A673 (cell line): ENCODE measurements at regions of chr5 and their contacts with region 1.

Region 1: DNA sequence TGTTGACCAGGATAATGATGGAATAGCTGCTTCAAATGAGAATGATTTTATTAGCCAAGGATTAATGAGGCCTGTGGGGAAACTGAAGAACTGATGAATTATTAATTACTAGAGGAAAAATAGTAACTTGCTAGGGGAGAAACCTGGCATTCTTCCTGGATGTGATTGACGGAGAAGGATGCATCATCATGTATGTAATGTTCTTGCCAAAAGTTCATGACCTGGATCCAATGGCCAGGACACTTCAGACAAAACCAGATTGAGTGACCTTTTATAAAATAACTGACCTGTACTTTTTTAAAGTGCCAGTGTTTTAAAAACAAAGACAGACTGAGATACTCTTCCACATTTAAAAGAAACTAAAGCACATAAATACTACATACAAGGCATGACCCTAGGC is 23.7 kb downstream of the KIAA1191 start:
- DNase-seq: no peak
- H3K4me3 ChIP-seq: no peak overlapping the region
- H3K27ac ChIP-seq: no peak overlapping the region
- H3K4me1 ChIP-seq: no peaks in the 10 kb centered on the region
- H3K27me3 ChIP-seq: no peaks in the 10 kb centered on the region
- CTCF ChIP-seq: no peak

Region 2: DNA sequence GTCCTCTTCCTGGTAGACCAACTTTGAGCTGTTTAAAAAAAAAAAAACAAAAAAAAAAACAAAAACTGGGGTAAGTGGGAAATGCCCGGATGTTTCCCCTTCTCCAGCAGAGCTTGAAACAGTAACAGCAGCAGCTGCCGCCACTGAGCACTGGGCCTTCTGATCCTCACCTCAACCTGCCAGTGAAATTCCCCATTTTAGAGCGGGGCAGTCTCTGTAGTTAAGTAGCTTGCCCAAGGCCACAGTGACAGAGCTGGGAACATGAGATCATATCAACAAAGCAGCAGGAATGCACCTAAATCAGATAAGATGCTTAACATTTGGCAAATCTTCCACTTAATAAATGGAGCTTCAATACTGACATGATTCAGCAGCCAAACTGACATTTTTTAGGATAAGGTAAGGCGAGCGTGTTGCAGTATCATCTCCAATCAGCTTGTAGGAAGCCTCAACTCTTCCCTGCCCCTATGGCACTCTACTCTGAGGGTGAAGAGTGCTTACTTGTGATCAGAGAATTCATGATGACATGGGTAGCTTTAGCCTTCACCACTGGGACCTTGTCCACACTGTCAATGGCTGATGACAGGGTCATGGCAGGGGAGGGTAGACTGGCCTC is 14.3 kb after region 1 on chr5:
- CTCF ChIA-PET with region 1: interaction called, 10 read pairs
- POLR2A ChIA-PET with region 1: no interaction called
- intact Hi-C with region 1: no loop called
- DNase-seq: no peak
- H3K4me3 ChIP-seq: no peak overlapping the region
- H3K27ac ChIP-seq: no peak overlapping the region
- H3K4me1 ChIP-seq: no peaks in the 10 kb centered on the region
- H3K27me3 ChIP-seq: no peaks in the 10 kb centered on the region
- CTCF ChIP-seq: no peak

Region 3: GRCh38 chr5:176368728-176369127 is 30.8 kb after region 1 on chr5:
- CTCF ChIA-PET with region 1: no interaction called
- POLR2A ChIA-PET with region 1: interaction called, 11 read pairs
- intact Hi-C with region 1: no loop called
- DNase-seq: no peak
- H3K4me3 ChIP-seq: no peak overlapping the region
- H3K27ac ChIP-seq: no peak overlapping the region
- H3K4me1 ChIP-seq: no peaks in the 10 kb centered on the region
- H3K27me3 ChIP-seq: no peaks in the 10 kb centered on the region
- CTCF ChIP-seq: no peak